PC-3 (cell line): ENCODE measurements at regions of chr4 and their contacts with region 1.

Region 1: GRCh38 chr4:70914000-70914399 is 11.8 kb downstream of the MOB1B start:
- DNase-seq: peak; percentile 22
- ATAC-seq: peak; percentile 30
- H3K4me3 ChIP-seq: no peak overlapping the region
- H3K27ac ChIP-seq: no peak overlapping the region
- H3K4me1 ChIP-seq: peaks cover 24% of the 10 kb centered on the region
- H3K27me3 ChIP-seq: no peaks in the 10 kb centered on the region
- CTCF ChIP-seq: peak; percentile 39; the same call in 1 of the 2 replicates

Region 2: DNA sequence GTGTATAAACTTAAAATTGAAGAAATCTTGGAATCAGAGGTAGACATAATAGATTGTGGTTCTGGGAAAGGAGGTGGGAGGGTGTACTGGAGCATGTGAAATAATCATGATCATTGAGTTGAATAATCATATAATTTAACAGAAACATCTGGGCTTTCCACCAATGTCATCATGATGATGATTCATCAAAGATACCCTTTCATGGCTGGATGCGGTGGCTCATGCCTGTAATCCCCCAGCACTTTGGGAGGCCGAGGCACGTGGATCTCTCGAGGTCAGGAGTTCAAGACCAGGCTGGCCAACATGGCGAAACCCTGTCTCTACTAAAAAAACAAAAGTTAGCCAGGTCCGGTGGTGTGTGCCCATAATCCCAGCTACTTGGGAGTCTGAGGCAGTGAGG is 198.9 kb before region 1 on chr4:
- CTCF ChIA-PET with region 1: no interaction called
- POLR2A ChIA-PET with region 1: no interaction called
- intact Hi-C with region 1: no loop called
- DNase-seq: no peak
- ATAC-seq: no peak
- H3K4me3 ChIP-seq: no peak overlapping the region
- H3K27ac ChIP-seq: no peak overlapping the region
- H3K4me1 ChIP-seq: no peaks in the 10 kb centered on the region
- H3K27me3 ChIP-seq: no peaks in the 10 kb centered on the region
- CTCF ChIP-seq: no peak

Region 3: GRCh38 chr4:70925899-70926635 is 12.1 kb after region 1 on chr4:
- CTCF ChIA-PET with region 1: interaction called, 4 read pairs
- POLR2A ChIA-PET with region 1: interaction called, 12 read pairs
- intact Hi-C with region 1: no loop called
- DNase-seq: no peak
- ATAC-seq: no peak
- H3K4me3 ChIP-seq: no peak overlapping the region
- H3K27ac ChIP-seq: no peak overlapping the region
- H3K4me1 ChIP-seq: peaks cover 10% of the 10 kb centered on the region
- H3K27me3 ChIP-seq: no peaks in the 10 kb centered on the region
- CTCF ChIP-seq: no peak